Dorsolateral prefrontal cortex (tissue), 120 donors: ENCODE measurements at regions of chr12 and their contacts with region 1.

Region 1: DNA sequence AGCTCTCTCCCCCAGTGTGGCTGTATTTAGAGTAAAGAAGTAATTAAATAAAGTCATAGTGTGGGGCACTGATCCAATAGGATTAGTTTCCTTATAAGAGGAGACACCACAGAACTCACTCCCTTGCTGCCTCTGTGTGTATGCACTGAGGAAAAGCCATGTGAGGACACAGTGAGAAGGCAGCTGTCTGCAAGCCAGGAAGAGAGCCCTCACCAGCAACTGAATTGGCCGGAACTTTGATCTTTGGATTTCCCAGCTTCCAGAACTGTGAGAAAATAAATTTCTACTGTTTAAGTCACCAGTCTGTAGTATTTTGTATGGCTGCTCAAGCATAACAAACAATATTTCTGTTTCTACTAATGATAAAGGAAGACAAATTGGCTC is 368.7 kb upstream of the PRICKLE1 start:
- DNase-seq: no peak
- H3K4me3 ChIP-seq: no peak overlapping the region
- H3K27ac ChIP-seq: no peak overlapping the region
- H3K27me3 ChIP-seq: peaks cover 0 to 6% (median 0%) of the 10 kb centered on the region in 45 donors
- CTCF ChIP-seq: no peak

Region 2: GRCh38 chr12:42589465-42590329 is 368.6 kb before region 1 on chr12 and contains the start of gene PRICKLE1:
- intact Hi-C with region 1: loop called in 1 of 2 experiments (anchors 5 kb)
- DNase-seq: peak in 3 of 10 donors; percentile 47 to 66 (median 54)
- H3K4me3 ChIP-seq: peak within 1 kb of the TSS; percentile 50 to 85 (median 70)
- H3K27ac ChIP-seq: peak within 1 kb of the TSS in 57 of 59 donors; percentile 31 to 94 (median 86)
- H3K27me3 ChIP-seq: peaks cover 0 to 67% (median 5%) of the 10 kb centered on the region in 45 donors
- CTCF ChIP-seq: no peak
- total RNA-seq, gene PRICKLE1: 9.9 to 57.6 (median 40.2) TPM

Region 3: DNA sequence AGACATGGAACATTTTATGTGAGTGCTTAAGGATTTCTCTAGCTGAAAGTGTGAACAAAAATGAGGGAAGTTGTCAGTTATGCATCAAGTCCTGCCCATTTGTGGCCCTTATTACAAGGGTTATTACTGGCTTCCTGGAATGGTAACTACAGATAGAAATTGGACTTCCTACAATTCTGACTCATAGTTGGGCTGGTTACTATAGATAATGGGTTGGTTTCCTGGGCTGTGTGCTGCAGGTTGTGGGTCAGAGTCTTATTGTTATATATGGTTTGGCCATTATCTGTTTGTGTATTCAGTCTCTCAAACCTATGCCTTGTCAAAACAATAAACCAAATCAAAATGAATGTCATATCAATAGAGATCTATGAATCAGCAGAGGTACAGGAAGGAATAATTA is 280.0 kb after region 1 on chr12:
- intact Hi-C with region 1: loop called in 1 of 2 experiments (anchors 5 kb)
- DNase-seq: no peak
- H3K4me3 ChIP-seq: no peak overlapping the region
- H3K27ac ChIP-seq: no peak overlapping the region
- H3K27me3 ChIP-seq: no peaks in the 10 kb centered on the region
- CTCF ChIP-seq: no peak

Region 4: GRCh38 chr12:43749016-43749415 is 790.7 kb after region 1 on chr12:
- intact Hi-C with region 1: no loop called
- DNase-seq: no peak
- H3K4me3 ChIP-seq: no peak overlapping the region
- H3K27ac ChIP-seq: no peak overlapping the region
- H3K27me3 ChIP-seq: no peaks in the 10 kb centered on the region
- CTCF ChIP-seq: no peak